HEK293T (cell line): ENCODE measurements at regions of chr5 and their contacts with region 1.

Region 1: DNA sequence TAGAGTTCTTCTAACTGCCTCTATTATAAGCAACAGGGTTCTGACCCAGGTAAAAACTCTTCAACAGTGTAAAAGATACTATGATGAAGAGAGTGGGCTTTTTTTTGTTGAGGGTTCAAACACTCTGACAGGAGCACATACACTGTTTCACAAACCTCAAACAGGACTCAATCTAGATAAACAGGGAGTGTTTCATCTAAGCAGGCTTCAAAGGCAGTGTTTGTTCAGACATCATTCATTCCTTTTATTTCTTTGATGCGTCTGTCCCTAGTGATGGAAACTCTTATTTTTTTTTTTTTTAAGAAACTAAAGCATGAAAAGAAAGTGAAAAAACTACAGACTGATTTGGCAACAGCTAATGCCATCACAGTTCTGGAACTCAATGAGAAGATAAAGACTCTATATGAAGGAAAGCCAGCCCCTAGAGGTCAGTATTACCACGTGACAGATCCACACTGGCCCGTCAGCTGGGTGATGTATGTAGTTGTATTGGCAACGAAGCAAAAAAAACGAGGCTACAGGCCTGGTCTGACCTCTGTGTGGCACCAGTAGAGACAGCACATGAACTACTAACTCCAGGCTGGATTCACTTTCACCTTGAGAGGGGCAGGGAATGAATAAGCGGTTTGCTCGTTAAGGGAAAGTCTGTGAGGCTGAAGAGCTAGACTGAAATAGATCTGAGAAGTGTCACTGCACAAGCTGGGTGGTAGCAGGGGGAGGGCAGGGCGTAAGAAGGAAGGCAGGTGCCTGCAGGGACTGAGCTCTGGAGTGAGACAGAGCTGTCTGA is 172.2 kb downstream of the CCDC192 start:
- DNase-seq: peak; percentile 38

Region 2: GRCh38 chr5:127796211-127796610 is 79.2 kb before region 1 on chr5:
- CTCF ChIA-PET with region 1: no interaction called
- POLR2A ChIA-PET with region 1: no interaction called
- DNase-seq: no peak

Region 3: GRCh38 chr5:127865273-127865672 is 10.2 kb before region 1 on chr5:
- CTCF ChIA-PET with region 1: interaction called, 20 read pairs
- POLR2A ChIA-PET with region 1: no interaction called
- DNase-seq: no peak

Region 4: GRCh38 chr5:128201065-128201926 is 325.9 kb after region 1 on chr5:
- CTCF ChIA-PET with region 1: interaction called, 13 read pairs
- POLR2A ChIA-PET with region 1: no interaction called
- DNase-seq: peak; percentile 82